PC-3 (cell line): ENCODE measurements at regions of chr10 and their contacts with region 1.

Region 1: GRCh38 chr10:95236068-95236903 is 42.2 kb downstream of the ACSM6 start:
- DNase-seq: peak; percentile 73
- ATAC-seq: peak; percentile 60
- H3K4me3 ChIP-seq: peak overlapping the region; percentile 22; the same call in 1 of the 2 replicates
- H3K27ac ChIP-seq: peak overlapping the region; percentile 75
- H3K4me1 ChIP-seq: peaks cover 37% of the 10 kb centered on the region
- H3K27me3 ChIP-seq: no peaks in the 10 kb centered on the region
- CTCF ChIP-seq: no peak

Region 2: GRCh38 chr10:93859049-93859655 is 1377.1 kb before region 1 on chr10:
- CTCF ChIA-PET with region 1: interaction called, 17 read pairs
- POLR2A ChIA-PET with region 1: no interaction called
- intact Hi-C with region 1: no loop called
- DNase-seq: peak; percentile 35
- ATAC-seq: no peak; the same call in 1 of the 2 replicates
- H3K4me3 ChIP-seq: no peak overlapping the region
- H3K27ac ChIP-seq: no peak overlapping the region
- H3K4me1 ChIP-seq: no peaks in the 10 kb centered on the region
- H3K27me3 ChIP-seq: no peaks in the 10 kb centered on the region
- CTCF ChIP-seq: peak; percentile 61

Region 3: DNA sequence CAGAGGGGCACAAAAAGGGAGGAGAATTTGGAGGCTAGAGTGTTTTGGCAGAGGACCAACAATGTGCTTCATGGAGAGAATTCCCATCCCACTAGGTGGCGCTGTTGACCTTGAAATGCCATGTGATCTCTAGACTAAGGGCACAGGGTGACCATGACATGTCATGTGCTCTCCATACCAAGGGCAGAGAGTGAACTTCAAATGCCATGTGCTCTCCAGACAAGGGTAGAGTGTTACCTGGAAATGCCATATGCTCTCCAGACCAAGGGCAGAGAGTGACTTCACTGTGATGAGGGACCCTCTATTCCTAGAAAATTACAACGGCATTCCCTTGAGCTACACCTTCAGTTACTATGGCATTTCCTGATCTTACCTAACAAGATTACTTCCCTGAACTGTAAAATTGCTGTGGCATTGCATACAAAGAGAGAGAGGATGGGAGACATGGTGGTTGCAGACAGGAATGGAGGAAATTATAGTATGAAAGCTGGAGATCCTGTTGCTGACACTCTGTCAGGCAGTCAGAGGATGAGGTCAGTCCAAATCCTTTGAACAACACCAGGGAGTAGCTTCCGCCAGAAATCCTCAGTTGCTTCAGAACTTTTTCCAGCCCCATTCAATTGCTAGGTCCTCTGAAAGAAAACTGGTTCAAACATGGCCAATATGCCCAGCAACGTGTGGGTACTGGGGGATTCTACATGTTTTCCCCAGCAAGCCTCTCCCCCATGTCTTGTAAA is 103.1 kb before region 1 on chr10:
- CTCF ChIA-PET with region 1: no interaction called
- POLR2A ChIA-PET with region 1: no interaction called
- intact Hi-C with region 1: no loop called
- DNase-seq: peak; percentile 82
- ATAC-seq: peak; percentile 62
- H3K4me3 ChIP-seq: no peak overlapping the region
- H3K27ac ChIP-seq: no peak overlapping the region
- H3K4me1 ChIP-seq: no peaks in the 10 kb centered on the region
- H3K27me3 ChIP-seq: no peaks in the 10 kb centered on the region
- CTCF ChIP-seq: peak; percentile 82